ENCODE measurements at regions of chr7 and their contacts with region 1.

Region 1: GRCh38 chr7:33062782-33063443 is 337 bp upstream of the NT5C3A start:
- DNase-seq: peak; percentile 88 to 97 (median 91)
- ATAC-seq: peak; percentile 92
- H3K4me3 ChIP-seq: peak overlapping the region; percentile 75 to 97
- H3K4me3 Mint-ChIP-seq: peak overlapping the region; percentile 91
- H3K27ac ChIP-seq: peak overlapping the region; percentile 79 to 82
- H3K27ac Mint-ChIP-seq: peak overlapping the region; percentile 94
- H3K4me1 ChIP-seq: peaks cover 32% of the 10 kb centered on the region
- H3K4me1 Mint-ChIP-seq: peaks cover 42% of the 10 kb centered on the region
- H3K27me3 ChIP-seq: no peaks in the 10 kb centered on the region
- H3K27me3 Mint-ChIP-seq: no peaks in the 10 kb centered on the region
- CTCF ChIP-seq: no peak

Region 2: GRCh38 chr7:32495298-32496176 is 567.4 kb before region 1 on chr7 and contains the start of gene AVL9:
- CTCF ChIA-PET with region 1: no interaction called
- POLR2A ChIA-PET with region 1: no interaction called
- intact Hi-C with region 1: loop called (anchors 1 to 2 kb)
- DNase-seq: peak; percentile 98 to 99 (median 99)
- ATAC-seq: peak; percentile 89
- H3K4me3 ChIP-seq: peak within 1 kb of the TSS; percentile 66 to 87
- H3K4me3 Mint-ChIP-seq: peak within 1 kb of the TSS; percentile 97
- H3K27ac ChIP-seq: peak within 1 kb of the TSS; percentile 95 to 99
- H3K27ac Mint-ChIP-seq: peak within 1 kb of the TSS; percentile 96
- H3K4me1 ChIP-seq: peaks cover 31% of the 10 kb centered on the region
- H3K4me1 Mint-ChIP-seq: peaks cover 42% of the 10 kb centered on the region
- H3K27me3 ChIP-seq: no peaks in the 10 kb centered on the region
- H3K27me3 Mint-ChIP-seq: no peaks in the 10 kb centered on the region
- CTCF ChIP-seq: no peak
- total RNA-seq, gene AVL9: 22.4 to 24.7 TPM

Region 3: GRCh38 chr7:32942786-32943653 is 119.9 kb before region 1 on chr7:
- CTCF ChIA-PET with region 1: no interaction called
- POLR2A ChIA-PET with region 1: no interaction called
- intact Hi-C with region 1: loop called in 1 of 2 experiments (anchors 2 kb)
- DNase-seq: peak; percentile 25 to 81 (median 67)
- ATAC-seq: peak; percentile 86
- H3K4me3 ChIP-seq: peak overlapping the region; percentile 55 to 66
- H3K4me3 Mint-ChIP-seq: peak overlapping the region; percentile 78
- H3K27ac ChIP-seq: peak overlapping the region in 1 of 2 experiments; percentile 30
- H3K27ac Mint-ChIP-seq: no peak overlapping the region
- H3K4me1 ChIP-seq: peaks cover 16% of the 10 kb centered on the region
- H3K4me1 Mint-ChIP-seq: peaks cover 8% of the 10 kb centered on the region
- H3K27me3 ChIP-seq: no peaks in the 10 kb centered on the region
- H3K27me3 Mint-ChIP-seq: peaks cover 10% of the 10 kb centered on the region
- CTCF ChIP-seq: peak; percentile 74

Region 4: GRCh38 chr7:33040803-33041516 is 22.0 kb before region 1 on chr7:
- CTCF ChIA-PET with region 1: interaction called, 4 read pairs
- POLR2A ChIA-PET with region 1: interaction called, 25 read pairs
- intact Hi-C with region 1: loop called (anchors 1 to 2 kb)
- DNase-seq: peak; percentile 36 to 87 (median 63)
- ATAC-seq: peak; percentile 99
- H3K4me3 ChIP-seq: peak overlapping the region; percentile 3 to 23
- H3K4me3 Mint-ChIP-seq: peak overlapping the region; percentile 77
- H3K27ac ChIP-seq: peak overlapping the region; percentile 54 to 75
- H3K27ac Mint-ChIP-seq: peak overlapping the region; percentile 90
- H3K4me1 ChIP-seq: peaks cover 25% of the 10 kb centered on the region
- H3K4me1 Mint-ChIP-seq: peaks cover 61% of the 10 kb centered on the region
- H3K27me3 ChIP-seq: no peaks in the 10 kb centered on the region
- H3K27me3 Mint-ChIP-seq: no peaks in the 10 kb centered on the region
- CTCF ChIP-seq: no peak

Region 5: GRCh38 chr7:33050535-33051318 is 12.2 kb before region 1 on chr7:
- CTCF ChIA-PET with region 1: interaction called, 5 read pairs
- POLR2A ChIA-PET with region 1: interaction called, 12 read pairs
- intact Hi-C with region 1: loop called in 1 of 2 experiments (anchors 1 kb)
- DNase-seq: peak in 5 of 9 experiments; percentile 11 to 73 (median 29)
- ATAC-seq: peak; percentile 63
- H3K4me3 ChIP-seq: no peak overlapping the region
- H3K4me3 Mint-ChIP-seq: no peak overlapping the region
- H3K27ac ChIP-seq: no peak overlapping the region
- H3K27ac Mint-ChIP-seq: no peak overlapping the region
- H3K4me1 ChIP-seq: peaks cover 20% of the 10 kb centered on the region
- H3K4me1 Mint-ChIP-seq: peaks cover 57% of the 10 kb centered on the region
- H3K27me3 ChIP-seq: no peaks in the 10 kb centered on the region
- H3K27me3 Mint-ChIP-seq: no peaks in the 10 kb centered on the region
- CTCF ChIP-seq: peak; percentile 78

Region 6: GRCh38 chr7:33128990-33129805 is 66.3 kb after region 1 on chr7 and contains the start of gene BBS9:
- CTCF ChIA-PET with region 1: no interaction called
- POLR2A ChIA-PET with region 1: no interaction called
- intact Hi-C with region 1: loop called (anchors 1 kb)
- DNase-seq: peak; percentile 80 to 94 (median 91)
- ATAC-seq: peak; percentile 95
- H3K4me3 ChIP-seq: peak within 1 kb of the TSS; percentile 85 to 88
- H3K4me3 Mint-ChIP-seq: peak within 1 kb of the TSS; percentile 96
- H3K27ac ChIP-seq: peak within 1 kb of the TSS; percentile 65 to 72
- H3K27ac Mint-ChIP-seq: peak within 1 kb of the TSS; percentile 91
- H3K4me1 ChIP-seq: peaks cover 14% of the 10 kb centered on the region
- H3K4me1 Mint-ChIP-seq: peaks cover 28% of the 10 kb centered on the region
- H3K27me3 ChIP-seq: no peaks in the 10 kb centered on the region
- H3K27me3 Mint-ChIP-seq: no peaks in the 10 kb centered on the region
- CTCF ChIP-seq: no peak
- total RNA-seq, gene BBS9: 15.7 to 16.7 TPM

Region 7: GRCh38 chr7:33217595-33217994 is 154.7 kb after region 1 on chr7:
- CTCF ChIA-PET with region 1: no interaction called
- POLR2A ChIA-PET with region 1: no interaction called
- intact Hi-C with region 1: no loop called
- DNase-seq: no peak
- ATAC-seq: no peak
- H3K4me3 ChIP-seq: no peak overlapping the region
- H3K4me3 Mint-ChIP-seq: no peak overlapping the region
- H3K27ac ChIP-seq: no peak overlapping the region
- H3K27ac Mint-ChIP-seq: no peak overlapping the region
- H3K4me1 ChIP-seq: no peaks in the 10 kb centered on the region
- H3K4me1 Mint-ChIP-seq: no peaks in the 10 kb centered on the region
- H3K27me3 ChIP-seq: no peaks in the 10 kb centered on the region
- H3K27me3 Mint-ChIP-seq: no peaks in the 10 kb centered on the region
- CTCF ChIP-seq: no peak

Region 8: GRCh38 chr7:35037526-35038339 is 1974.8 kb after region 1 on chr7:
- CTCF ChIA-PET with region 1: no interaction called
- POLR2A ChIA-PET with region 1: no interaction called
- intact Hi-C with region 1: loop called in 1 of 2 experiments (anchors 5 kb)
- DNase-seq: peak; percentile 76 to 96 (median 90)
- ATAC-seq: peak; percentile 71
- H3K4me3 ChIP-seq: peak overlapping the region; percentile 44 to 66
- H3K4me3 Mint-ChIP-seq: peak overlapping the region; percentile 89
- H3K27ac ChIP-seq: peak overlapping the region; percentile 26 to 49
- H3K27ac Mint-ChIP-seq: peak overlapping the region; percentile 80
- H3K4me1 ChIP-seq: peaks cover 25% of the 10 kb centered on the region
- H3K4me1 Mint-ChIP-seq: peaks cover 32% of the 10 kb centered on the region
- H3K27me3 ChIP-seq: no peaks in the 10 kb centered on the region
- H3K27me3 Mint-ChIP-seq: no peaks in the 10 kb centered on the region
- CTCF ChIP-seq: peak; percentile 74

Measured in CD8-positive, alpha-beta T cell (primary cell).